Activated CD4-positive, alpha-beta memory T cell treated with anti-CD3 and anti-CD28 coated beads for 36 hours (primary cell): ENCODE measurements at regions of chr2 and their contacts with region 1.

Region 1: DNA sequence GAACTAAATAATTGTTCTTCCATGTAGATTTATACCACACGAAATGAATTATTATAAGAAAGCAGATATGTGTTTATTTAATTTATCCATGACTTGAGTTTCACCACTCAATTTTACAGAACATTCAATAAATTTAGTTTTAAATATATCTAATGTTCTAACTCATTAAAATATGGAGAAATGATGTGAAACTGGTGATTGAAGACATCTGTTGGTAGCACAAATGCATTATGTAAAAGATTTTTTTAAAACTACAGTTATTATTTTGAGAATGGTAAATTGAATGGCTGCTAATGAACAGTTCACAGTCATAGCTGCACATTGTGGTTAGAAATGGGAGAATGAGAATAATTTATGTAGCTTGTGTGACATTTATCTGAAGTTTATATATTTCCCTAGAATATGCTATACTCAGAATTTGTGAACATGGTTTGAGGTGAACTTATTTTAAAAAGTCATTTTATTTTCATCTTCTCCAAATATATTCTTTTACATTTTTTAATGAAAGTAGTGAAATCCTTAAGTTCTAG is 203.5 kb downstream of the DPP4 start:
- DNase-seq: no peak
- H3K4me3 Mint-ChIP-seq: no peak overlapping the region
- H3K27ac Mint-ChIP-seq: no peak overlapping the region
- H3K4me1 Mint-ChIP-seq: peaks cover 5% of the 10 kb centered on the region
- H3K27me3 Mint-ChIP-seq: peaks cover 2% of the 10 kb centered on the region

Region 2: GRCh38 chr2:161847910-161848309 is 22.6 kb before region 1 on chr2:
- CTCF ChIA-PET with region 1: no interaction called
- POLR2A ChIA-PET with region 1: no interaction called
- intact Hi-C with region 1: loop called (anchors 1 kb)
- DNase-seq: no peak
- H3K4me3 Mint-ChIP-seq: no peak overlapping the region
- H3K27ac Mint-ChIP-seq: no peak overlapping the region
- H3K4me1 Mint-ChIP-seq: no peaks in the 10 kb centered on the region
- H3K27me3 Mint-ChIP-seq: no peaks in the 10 kb centered on the region

Region 3: GRCh38 chr2:161905389-161906046 is 35.1 kb after region 1 on chr2:
- CTCF ChIA-PET with region 1: no interaction called
- POLR2A ChIA-PET with region 1: no interaction called
- intact Hi-C with region 1: loop called (anchors 2 kb)
- DNase-seq: peak; percentile 43
- H3K4me3 Mint-ChIP-seq: no peak overlapping the region
- H3K27ac Mint-ChIP-seq: peak overlapping the region; percentile 66
- H3K4me1 Mint-ChIP-seq: peaks cover 10% of the 10 kb centered on the region
- H3K27me3 Mint-ChIP-seq: no peaks in the 10 kb centered on the region